Naive thymus-derived CD4-positive, alpha-beta T cell (primary cell): ENCODE measurements at regions of chr5 and their contacts with region 1.

Region 1: DNA sequence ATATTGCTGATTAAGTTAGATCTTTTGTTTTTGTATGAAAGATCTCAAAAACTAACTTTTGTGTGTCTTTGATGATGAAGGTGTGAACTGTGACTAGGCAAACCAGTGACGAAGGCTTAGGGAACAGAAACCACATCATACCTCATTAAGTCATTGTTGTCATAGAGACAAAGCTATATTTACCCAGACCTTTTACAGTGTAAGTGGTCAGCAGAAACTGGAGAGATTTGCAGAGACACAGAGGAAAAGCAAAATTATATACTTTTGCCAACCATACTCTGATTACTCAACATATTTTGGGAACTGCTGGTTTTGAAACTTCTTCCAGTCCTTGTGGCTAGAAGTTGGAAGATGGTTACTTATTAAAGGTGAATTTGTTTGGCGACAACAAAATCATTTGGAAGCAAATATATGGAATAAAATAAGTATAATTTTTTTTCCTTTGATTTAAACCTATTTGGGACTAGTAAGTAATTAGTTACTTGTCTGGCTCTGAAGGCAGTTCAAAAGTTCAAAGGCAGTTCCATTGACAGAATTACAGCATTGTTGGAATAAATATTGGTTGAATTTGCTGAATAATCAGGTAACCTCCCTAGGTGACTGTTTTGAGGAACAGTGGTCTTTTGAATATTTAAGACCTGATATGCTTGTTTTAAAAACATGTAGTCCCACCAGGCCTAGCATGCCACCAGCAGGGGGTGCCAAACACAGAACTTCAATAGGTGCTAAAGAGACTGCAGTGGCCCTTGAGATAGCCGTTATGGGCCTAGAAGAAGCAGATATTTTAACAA is 103.8 kb downstream of the RPS23 start:
- DNase-seq: peak; percentile 10 to 44 (median 35)
- ATAC-seq: peak; percentile 86
- H3K4me3 ChIP-seq: no peak overlapping the region
- H3K4me3 Mint-ChIP-seq: no peak overlapping the region
- H3K27ac ChIP-seq: no peak overlapping the region
- H3K27ac Mint-ChIP-seq: peak overlapping the region in 1 of 9 donors; percentile 6
- H3K4me1 ChIP-seq: no peaks in the 10 kb centered on the region
- H3K4me1 Mint-ChIP-seq: peaks cover 0 to 8% (median 0%) of the 10 kb centered on the region in 7 donors
- H3K27me3 ChIP-seq: no peaks in the 10 kb centered on the region
- H3K27me3 Mint-ChIP-seq: no peaks in the 10 kb centered on the region

Region 2: DNA sequence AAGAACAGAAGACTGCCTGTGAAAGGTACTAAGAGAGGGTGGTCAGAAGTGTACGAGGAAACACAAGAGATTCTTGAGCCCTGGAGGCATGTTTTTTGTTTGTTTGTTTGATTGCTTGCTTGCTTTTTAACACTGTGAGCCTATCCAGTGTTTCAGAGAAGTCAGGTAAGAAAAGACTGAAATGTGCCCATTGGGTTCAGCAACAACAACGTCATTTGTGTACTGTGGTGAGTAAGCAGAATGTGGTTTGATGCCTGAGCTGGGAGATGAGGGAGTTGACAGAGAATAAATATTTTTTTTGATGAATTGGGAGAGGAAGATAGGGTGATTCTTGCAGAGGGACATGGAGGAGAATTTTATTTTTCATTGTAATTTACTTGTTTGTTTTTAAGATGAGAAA is 30.7 kb after region 1 on chr5:
- CTCF ChIA-PET with region 1: no interaction called
- POLR2A ChIA-PET with region 1: no interaction called
- intact Hi-C with region 1: no loop called
- DNase-seq: no peak
- ATAC-seq: no peak
- H3K4me3 ChIP-seq: no peak overlapping the region
- H3K4me3 Mint-ChIP-seq: no peak overlapping the region
- H3K27ac ChIP-seq: no peak overlapping the region
- H3K27ac Mint-ChIP-seq: no peak overlapping the region
- H3K4me1 ChIP-seq: no peaks in the 10 kb centered on the region
- H3K4me1 Mint-ChIP-seq: no peaks in the 10 kb centered on the region
- H3K27me3 ChIP-seq: no peaks in the 10 kb centered on the region
- H3K27me3 Mint-ChIP-seq: no peaks in the 10 kb centered on the region

Region 3: DNA sequence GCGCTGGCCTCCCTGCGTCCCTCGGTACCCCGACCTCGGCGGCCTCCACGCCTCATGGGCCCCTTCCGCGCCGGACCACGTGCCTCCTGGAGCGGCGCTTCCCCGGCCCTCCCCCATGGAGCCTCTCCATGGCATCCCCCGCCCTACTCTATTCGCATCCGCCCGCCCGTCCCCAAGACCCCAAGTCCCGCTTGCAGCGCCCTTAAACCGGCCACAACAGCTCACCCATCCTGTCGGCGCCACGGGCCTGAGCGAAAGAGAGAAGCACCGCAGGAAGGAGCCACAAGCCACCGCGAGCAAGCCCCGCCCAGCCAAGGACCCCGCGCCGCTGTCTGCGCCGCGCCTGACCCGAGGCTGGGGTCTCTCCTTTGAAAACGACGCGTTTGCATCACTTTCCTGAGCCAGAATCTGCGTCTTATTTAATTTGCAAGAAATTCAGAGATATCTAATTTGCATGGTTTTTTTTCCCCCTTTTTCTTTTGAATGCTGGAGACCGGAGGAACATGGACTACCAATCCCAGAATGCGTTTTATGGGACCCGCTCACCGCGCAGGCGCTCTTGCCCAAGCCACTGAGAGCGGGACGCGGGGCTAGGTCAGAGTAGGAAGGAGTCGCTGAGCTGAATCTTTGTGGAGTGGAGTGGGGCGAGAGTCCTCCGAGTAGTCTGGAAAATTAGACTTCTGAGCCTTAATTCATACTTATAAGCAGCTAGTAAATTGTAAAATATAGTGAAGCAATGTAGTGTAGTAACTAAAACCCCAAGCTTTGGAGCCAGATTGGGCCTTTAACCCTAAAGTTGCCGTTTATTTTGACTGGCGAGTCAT is 104.0 kb after region 1 on chr5 and contains the start of gene RPS23:
- CTCF ChIA-PET with region 1: no interaction called
- POLR2A ChIA-PET with region 1: no interaction called
- intact Hi-C with region 1: loop called in 1 of 2 experiments (anchors 1 kb)
- DNase-seq: peak; percentile 78 to 90 (median 85)
- ATAC-seq: peak; percentile 96
- H3K4me3 ChIP-seq: peak within 1 kb of the TSS; percentile 72
- H3K4me3 Mint-ChIP-seq: peak within 1 kb of the TSS; percentile 87 to 98 (median 94)
- H3K27ac ChIP-seq: peak within 1 kb of the TSS; percentile 80
- H3K27ac Mint-ChIP-seq: peak within 1 kb of the TSS; percentile 94 to 99 (median 96)
- H3K4me1 ChIP-seq: peaks cover 12 to 16% of the 10 kb centered on the region in 2 donors
- H3K4me1 Mint-ChIP-seq: peaks cover 13 to 65% (median 39%) of the 10 kb centered on the region in 7 donors
- H3K27me3 ChIP-seq: no peaks in the 10 kb centered on the region
- H3K27me3 Mint-ChIP-seq: no peaks in the 10 kb centered on the region
- total RNA-seq, gene RPS23: 2,233 to 4,335 (median 3,874) TPM

Region 4: DNA sequence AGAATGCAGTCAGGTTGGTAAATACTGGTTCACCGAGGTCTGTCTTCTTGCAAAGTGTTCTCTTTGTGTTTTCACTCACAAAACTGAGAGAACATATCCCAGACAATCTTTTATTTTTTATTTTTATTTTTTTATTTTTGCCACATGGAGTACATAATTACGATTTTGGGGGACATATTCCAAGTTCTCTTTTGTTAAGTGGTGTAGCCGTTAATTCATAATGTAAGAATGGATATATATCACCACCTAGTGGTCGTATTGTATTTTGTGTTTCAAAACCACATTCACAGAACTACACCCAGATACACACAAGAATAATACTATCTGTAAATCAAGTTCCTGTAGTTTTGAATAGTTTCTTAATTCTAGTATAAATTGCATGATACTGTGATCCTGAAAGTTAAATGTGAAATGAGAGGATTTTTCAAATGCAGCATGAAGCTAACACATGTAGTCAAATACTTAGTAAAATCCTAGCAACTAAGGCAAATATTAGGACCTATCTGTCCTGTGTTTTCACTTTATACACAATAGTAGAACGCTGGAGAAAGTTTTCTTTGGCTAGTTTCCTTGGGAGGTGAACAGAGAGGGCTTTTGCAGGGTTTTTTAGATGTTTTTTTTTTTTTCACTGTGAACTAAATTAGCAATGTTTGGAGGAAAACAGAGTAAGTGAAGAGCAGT is 1389.9 kb after region 1 on chr5:
- CTCF ChIA-PET with region 1: no interaction called
- POLR2A ChIA-PET with region 1: no interaction called
- intact Hi-C with region 1: loop called in 1 of 2 experiments (anchors 5 kb)
- DNase-seq: peak in 5 of 9 donors; percentile 27 to 40 (median 31)
- ATAC-seq: peak; percentile 42
- H3K4me3 ChIP-seq: no peak overlapping the region
- H3K4me3 Mint-ChIP-seq: no peak overlapping the region
- H3K27ac ChIP-seq: no peak overlapping the region
- H3K27ac Mint-ChIP-seq: no peak overlapping the region
- H3K4me1 ChIP-seq: no peaks in the 10 kb centered on the region
- H3K4me1 Mint-ChIP-seq: no peaks in the 10 kb centered on the region
- H3K27me3 ChIP-seq: peaks cover 0 to 4% of the 10 kb centered on the region in 2 donors
- H3K27me3 Mint-ChIP-seq: peaks cover 18 to 34% (median 27%) of the 10 kb centered on the region in 5 donors